CD14-positive monocyte (primary cell): ENCODE measurements at regions of chr1 and their contacts with region 1.

Region 1: GRCh38 chr1:9101510-9102146 is 27.3 kb downstream of the GPR157 start:
- DNase-seq: peak; percentile 50 to 63 (median 59)
- H3K4me3 ChIP-seq: no peak overlapping the region
- H3K4me3 Mint-ChIP-seq: no peak overlapping the region
- H3K27ac ChIP-seq: no peak overlapping the region
- H3K27ac Mint-ChIP-seq: peak overlapping the region in 2 of 7 donors; percentile 57 to 58
- H3K4me1 ChIP-seq: no peaks in the 10 kb centered on the region
- H3K4me1 Mint-ChIP-seq: peaks cover 10% of the 10 kb centered on the region
- H3K27me3 ChIP-seq: no peaks in the 10 kb centered on the region
- H3K27me3 Mint-ChIP-seq: peaks cover 0 to 3% (median 0%) of the 10 kb centered on the region in 3 donors
- CTCF ChIP-seq: peak; percentile 84

Region 2: DNA sequence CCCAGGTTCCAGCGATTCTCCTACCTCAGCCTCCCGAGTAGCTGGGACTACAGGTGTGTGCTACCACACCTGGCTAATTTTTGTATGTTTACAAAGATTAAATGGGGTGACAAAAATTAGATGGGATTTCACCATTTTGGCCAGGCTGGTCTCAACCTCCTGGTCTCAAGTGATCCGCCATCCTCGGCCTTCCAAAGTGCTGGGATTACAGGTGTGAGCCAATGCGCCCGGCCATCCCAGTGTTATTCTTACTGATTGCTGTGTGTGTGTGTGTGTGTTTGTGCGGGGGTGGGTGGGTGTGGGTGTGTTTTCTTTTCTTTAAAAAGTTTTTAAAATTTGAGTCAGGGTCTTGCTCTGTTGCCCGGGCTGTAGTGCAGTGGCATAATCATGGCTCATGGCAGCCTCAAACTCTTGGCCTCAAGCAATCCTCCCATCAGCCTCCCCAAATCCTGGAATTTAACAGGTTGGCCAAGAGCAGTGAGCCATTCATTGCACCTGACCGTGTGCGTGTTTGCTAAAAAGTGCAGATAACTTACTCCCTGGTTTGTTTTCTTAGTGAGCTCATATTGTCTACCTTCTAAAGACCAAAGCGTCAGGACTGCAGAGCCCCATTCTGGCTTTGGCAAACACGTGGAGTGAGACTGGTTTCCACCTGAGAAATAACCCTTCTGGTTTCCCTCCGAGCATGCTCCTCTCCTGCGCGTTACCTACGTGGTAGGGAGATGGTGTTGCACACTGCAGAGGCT is 188.3 kb before region 1 on chr1:
- intact Hi-C with region 1: no loop called
- DNase-seq: no peak
- H3K4me3 ChIP-seq: no peak overlapping the region
- H3K4me3 Mint-ChIP-seq: no peak overlapping the region
- H3K27ac ChIP-seq: no peak overlapping the region
- H3K27ac Mint-ChIP-seq: peak overlapping the region in 1 of 7 donors; percentile 25
- H3K4me1 ChIP-seq: peaks cover 6 to 14% of the 10 kb centered on the region in 2 donors
- H3K4me1 Mint-ChIP-seq: peaks cover 20% of the 10 kb centered on the region
- H3K27me3 ChIP-seq: no peaks in the 10 kb centered on the region
- H3K27me3 Mint-ChIP-seq: peaks cover 0 to 4% (median 2%) of the 10 kb centered on the region in 3 donors
- CTCF ChIP-seq: no peak

Region 3: GRCh38 chr1:8925406-8925805 is 176.2 kb before region 1 on chr1:
- intact Hi-C with region 1: loop called (anchors 10 kb)
- DNase-seq: peak; percentile 45 to 63 (median 56)
- H3K4me3 ChIP-seq: no peak overlapping the region
- H3K4me3 Mint-ChIP-seq: no peak overlapping the region
- H3K27ac ChIP-seq: no peak overlapping the region
- H3K27ac Mint-ChIP-seq: no peak overlapping the region
- H3K4me1 ChIP-seq: peaks cover 8 to 10% of the 10 kb centered on the region in 2 donors
- H3K4me1 Mint-ChIP-seq: peaks cover 5% of the 10 kb centered on the region
- H3K27me3 ChIP-seq: no peaks in the 10 kb centered on the region
- H3K27me3 Mint-ChIP-seq: no peaks in the 10 kb centered on the region
- CTCF ChIP-seq: no peak

Region 4: DNA sequence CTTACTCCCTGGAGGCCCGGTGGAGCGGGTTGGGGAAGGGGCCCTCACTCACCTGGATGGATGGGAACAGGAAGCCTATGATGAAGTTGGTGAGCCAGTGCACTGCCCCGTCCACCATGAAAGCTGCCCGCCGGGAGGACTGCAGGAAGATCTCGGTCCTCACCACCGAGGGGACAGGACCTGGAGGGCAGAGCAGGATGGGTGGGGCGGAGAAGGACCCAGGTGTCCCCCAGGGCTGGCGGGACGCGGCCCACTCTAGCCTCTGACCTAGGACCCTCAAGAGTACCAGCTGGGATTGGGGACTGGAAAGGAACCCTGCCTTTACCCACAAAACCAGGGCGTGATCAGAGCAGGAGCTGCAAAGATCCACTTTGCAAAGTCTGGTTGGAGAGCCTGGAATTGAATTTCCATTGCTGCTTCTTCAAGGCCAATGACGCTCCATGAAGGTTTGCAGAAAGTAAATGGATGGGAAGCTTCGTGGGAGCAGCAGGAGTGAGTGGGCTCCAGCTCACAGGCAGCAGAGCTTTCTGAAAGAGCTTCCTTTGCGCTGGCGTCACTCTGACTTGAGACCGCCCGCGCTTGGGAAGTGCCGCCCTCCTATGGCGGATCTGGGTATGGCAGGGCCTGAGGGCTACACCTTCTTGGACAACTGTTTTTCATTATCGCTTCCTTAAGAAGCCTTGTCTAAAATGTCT is 96.8 kb before region 1 on chr1:
- intact Hi-C with region 1: loop called in 1 of 2 experiments (anchors 2 kb)
- DNase-seq: peak; percentile 64 to 72 (median 69)
- H3K4me3 ChIP-seq: no peak overlapping the region
- H3K4me3 Mint-ChIP-seq: peak overlapping the region in 1 of 2 donors; percentile 59
- H3K27ac ChIP-seq: no peak overlapping the region
- H3K27ac Mint-ChIP-seq: no peak overlapping the region
- H3K4me1 ChIP-seq: peaks cover 22 to 30% of the 10 kb centered on the region in 2 donors
- H3K4me1 Mint-ChIP-seq: peaks cover 32% of the 10 kb centered on the region
- H3K27me3 ChIP-seq: no peaks in the 10 kb centered on the region
- H3K27me3 Mint-ChIP-seq: peaks cover 2 to 9% (median 6%) of the 10 kb centered on the region in 3 donors
- CTCF ChIP-seq: peak; percentile 96

Region 5: DNA sequence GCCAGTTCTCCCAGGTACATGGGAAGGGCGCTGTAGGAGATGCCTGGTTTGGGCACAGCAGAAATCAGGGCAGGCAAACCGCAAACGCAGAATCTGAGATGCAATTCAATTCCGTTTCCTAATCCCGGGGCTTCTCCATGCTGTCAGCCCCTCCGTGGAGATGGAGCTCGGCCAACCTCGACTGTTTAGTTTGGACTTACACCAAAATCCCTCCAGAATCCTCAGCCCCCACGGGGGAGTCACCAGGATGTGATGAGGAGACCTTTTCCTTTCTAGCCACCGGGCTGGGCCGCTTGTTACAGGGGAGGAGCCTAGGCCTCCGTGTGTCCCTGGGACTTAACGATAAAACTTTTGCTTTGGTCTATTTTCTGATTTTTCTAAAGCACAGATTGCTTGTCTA is 83.3 kb before region 1 on chr1:
- intact Hi-C with region 1: loop called in 1 of 2 experiments (anchors 5 kb)
- DNase-seq: no peak
- H3K4me3 ChIP-seq: no peak overlapping the region
- H3K4me3 Mint-ChIP-seq: no peak overlapping the region
- H3K27ac ChIP-seq: no peak overlapping the region
- H3K27ac Mint-ChIP-seq: no peak overlapping the region
- H3K4me1 ChIP-seq: no peaks in the 10 kb centered on the region
- H3K4me1 Mint-ChIP-seq: peaks cover 5% of the 10 kb centered on the region
- H3K27me3 ChIP-seq: peaks cover 0 to 2% of the 10 kb centered on the region in 2 donors
- H3K27me3 Mint-ChIP-seq: peaks cover 4 to 18% (median 8%) of the 10 kb centered on the region in 3 donors
- CTCF ChIP-seq: no peak

Region 6: DNA sequence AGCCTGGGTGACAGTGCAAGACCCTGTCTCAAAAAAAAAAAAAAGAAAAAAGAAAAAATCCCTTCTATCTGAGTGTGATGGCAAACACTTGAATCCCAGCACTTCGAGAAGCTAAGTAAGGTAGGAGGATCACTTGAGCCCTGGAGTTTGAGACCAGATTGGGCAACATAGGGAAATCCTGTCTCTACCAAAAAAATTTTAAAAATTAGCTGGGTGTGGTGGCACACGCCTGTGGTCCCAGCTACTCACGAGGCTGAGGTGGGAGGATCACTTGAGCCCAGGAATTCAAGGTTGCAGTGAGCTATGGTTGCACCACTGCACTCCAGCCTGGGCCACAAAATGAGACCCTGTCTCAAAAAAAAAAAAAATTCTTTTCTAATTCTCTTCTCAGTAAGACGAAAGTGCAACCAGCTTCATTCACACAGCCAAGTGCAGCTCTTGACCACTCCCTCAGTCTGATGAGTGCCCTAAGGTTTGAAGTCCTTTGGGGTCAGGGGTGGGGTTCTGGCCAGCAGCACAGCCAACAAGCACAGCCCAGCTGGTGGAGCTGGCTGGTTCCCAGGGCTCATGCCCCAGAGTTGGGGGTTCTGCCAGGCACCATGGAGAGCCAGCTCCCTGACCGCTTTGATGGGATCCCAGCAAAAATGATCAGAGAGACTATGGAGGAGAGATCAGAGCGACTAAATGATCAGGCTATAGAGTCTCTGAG is 40.2 kb before region 1 on chr1:
- intact Hi-C with region 1: loop called in 1 of 2 experiments (anchors 5 kb)
- DNase-seq: peak in 1 of 3 donors; percentile 53
- H3K4me3 ChIP-seq: no peak overlapping the region
- H3K4me3 Mint-ChIP-seq: peak overlapping the region in 1 of 2 donors; percentile 24
- H3K27ac ChIP-seq: no peak overlapping the region
- H3K27ac Mint-ChIP-seq: peak overlapping the region in 3 of 7 donors; percentile 6 to 26 (median 15)
- H3K4me1 ChIP-seq: peaks cover 32 to 35% of the 10 kb centered on the region in 2 donors
- H3K4me1 Mint-ChIP-seq: peaks cover 48% of the 10 kb centered on the region
- H3K27me3 ChIP-seq: no peaks in the 10 kb centered on the region
- H3K27me3 Mint-ChIP-seq: no peaks in the 10 kb centered on the region
- CTCF ChIP-seq: no peak